Activated CD4-positive, alpha-beta T cell treated with anti-CD3 and anti-CD28 coated beads for 36 hours (primary cell): ENCODE measurements at regions of chr5 and their contacts with region 1.

Region 1: GRCh38 chr5:139711067-139711905 is 63.1 kb downstream of the CXXC5 start:
- DNase-seq: peak; percentile 78
- ATAC-seq: peak; percentile 84
- H3K4me3 Mint-ChIP-seq: peak overlapping the region; percentile 52
- H3K27ac Mint-ChIP-seq: no peak overlapping the region
- H3K4me1 Mint-ChIP-seq: peaks cover 13% of the 10 kb centered on the region
- H3K27me3 Mint-ChIP-seq: peaks cover 5% of the 10 kb centered on the region

Region 2: DNA sequence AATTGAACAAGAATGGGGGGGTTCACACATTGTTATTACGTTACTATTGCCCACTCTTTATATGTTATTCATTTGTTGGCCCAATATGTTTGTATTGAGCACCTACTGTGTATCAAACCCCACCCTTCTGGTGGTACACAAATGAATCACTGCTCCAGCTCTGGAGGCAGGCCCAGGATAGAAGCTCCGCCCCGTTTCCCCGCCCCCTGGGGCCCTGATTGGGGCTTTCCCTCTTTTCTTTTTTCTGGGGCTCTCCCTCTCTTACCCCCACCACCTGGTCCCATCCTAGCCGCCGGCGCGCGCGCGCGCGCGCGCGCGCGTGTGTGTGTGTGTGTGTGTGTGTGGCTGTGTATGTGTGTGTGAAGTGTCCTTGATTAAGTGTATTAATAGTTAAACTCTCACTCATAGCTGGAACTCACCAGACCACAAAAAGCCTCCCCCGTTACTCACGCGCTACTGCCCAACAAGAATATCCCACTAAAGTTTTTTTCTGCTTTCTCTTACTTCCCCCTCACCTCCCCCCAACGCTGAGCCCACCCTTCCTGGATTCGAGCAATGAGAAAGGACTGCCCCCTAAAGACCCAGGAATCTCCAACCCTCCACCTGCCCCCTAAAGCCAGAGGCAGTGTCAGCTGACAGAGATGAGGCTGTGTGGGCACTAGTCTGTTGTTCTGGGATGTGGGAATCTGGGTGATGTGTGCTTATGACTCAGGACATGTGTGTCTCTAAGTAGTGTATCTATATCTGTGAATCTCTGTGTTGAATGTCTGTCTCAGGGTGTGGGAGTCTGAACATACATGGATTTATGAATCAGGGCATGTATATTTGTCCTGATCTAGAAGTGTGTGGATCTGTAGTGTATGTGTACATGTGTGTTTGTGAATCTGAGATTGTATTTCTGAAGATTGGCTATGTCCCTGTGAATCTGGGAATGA is 59.2 kb before region 1 on chr5:
- CTCF ChIA-PET with region 1: no interaction called
- POLR2A ChIA-PET with region 1: no interaction called
- intact Hi-C with region 1: loop called in 1 of 2 experiments (anchors 1 kb)
- DNase-seq: peak; percentile 82
- ATAC-seq: peak; percentile 64
- H3K4me3 Mint-ChIP-seq: no peak overlapping the region
- H3K27ac Mint-ChIP-seq: no peak overlapping the region
- H3K4me1 Mint-ChIP-seq: peaks cover 34% of the 10 kb centered on the region
- H3K27me3 Mint-ChIP-seq: peaks cover 40% of the 10 kb centered on the region

Region 3: DNA sequence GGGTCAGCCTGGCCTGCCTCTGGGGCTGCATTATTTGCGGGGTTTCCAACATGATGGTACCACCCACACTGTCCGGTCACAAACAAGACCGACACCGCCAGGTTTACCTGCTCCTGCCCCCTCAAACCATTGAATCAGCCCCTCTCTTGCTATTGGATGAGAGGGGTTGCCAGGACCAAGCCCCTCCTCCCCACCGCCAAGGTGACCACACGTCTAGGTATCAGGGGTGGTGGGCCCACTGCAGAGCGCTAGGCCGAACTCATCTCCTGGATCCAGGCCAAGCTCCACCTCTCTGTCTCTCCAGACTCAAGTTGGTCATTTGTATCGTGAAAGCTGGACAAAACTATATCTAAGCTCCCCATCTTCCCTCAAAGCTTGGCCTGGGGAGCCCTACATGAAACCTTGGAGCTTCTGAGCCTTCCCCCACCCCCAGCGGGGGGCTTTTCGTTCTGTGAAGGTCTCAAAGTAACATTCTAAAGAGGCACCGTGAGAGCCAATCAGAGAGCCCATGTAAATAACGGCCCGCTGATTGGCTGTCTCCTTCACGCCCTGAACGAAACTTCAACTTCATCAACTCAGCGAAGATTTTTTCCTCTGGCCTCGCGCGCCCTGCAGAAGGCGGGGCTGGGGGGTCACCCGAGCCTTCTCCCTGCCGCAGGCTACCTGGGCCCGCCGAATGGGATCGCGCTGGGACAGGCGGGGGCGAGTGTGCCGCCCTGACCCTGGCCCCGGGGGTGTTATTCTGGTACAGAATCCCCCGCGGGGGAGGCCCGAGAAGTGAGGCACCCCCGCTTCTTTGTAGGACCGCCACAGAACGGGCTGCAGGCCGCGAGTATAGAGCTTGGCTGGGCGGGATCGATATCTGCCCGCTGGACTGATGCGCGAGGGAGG is 34.8 kb after region 1 on chr5:
- CTCF ChIA-PET with region 1: interaction called, 4 read pairs
- POLR2A ChIA-PET with region 1: no interaction called
- intact Hi-C with region 1: loop called (anchors 1 to 2 kb)
- DNase-seq: peak; percentile 70
- ATAC-seq: peak; percentile 27
- H3K4me3 Mint-ChIP-seq: peak overlapping the region; percentile 60
- H3K27ac Mint-ChIP-seq: no peak overlapping the region
- H3K4me1 Mint-ChIP-seq: peaks cover 29% of the 10 kb centered on the region
- H3K27me3 Mint-ChIP-seq: peaks cover 16% of the 10 kb centered on the region

Region 4: GRCh38 chr5:139908749-139909148 is 197.5 kb after region 1 on chr5:
- CTCF ChIA-PET with region 1: no interaction called
- POLR2A ChIA-PET with region 1: no interaction called
- intact Hi-C with region 1: no loop called
- DNase-seq: no peak
- ATAC-seq: no peak
- H3K4me3 Mint-ChIP-seq: no peak overlapping the region
- H3K27ac Mint-ChIP-seq: no peak overlapping the region
- H3K4me1 Mint-ChIP-seq: no peaks in the 10 kb centered on the region
- H3K27me3 Mint-ChIP-seq: peaks cover 4% of the 10 kb centered on the region